MCF 10A (cell line): ENCODE measurements at regions of chr1 and their contacts with region 1.

Region 1: DNA sequence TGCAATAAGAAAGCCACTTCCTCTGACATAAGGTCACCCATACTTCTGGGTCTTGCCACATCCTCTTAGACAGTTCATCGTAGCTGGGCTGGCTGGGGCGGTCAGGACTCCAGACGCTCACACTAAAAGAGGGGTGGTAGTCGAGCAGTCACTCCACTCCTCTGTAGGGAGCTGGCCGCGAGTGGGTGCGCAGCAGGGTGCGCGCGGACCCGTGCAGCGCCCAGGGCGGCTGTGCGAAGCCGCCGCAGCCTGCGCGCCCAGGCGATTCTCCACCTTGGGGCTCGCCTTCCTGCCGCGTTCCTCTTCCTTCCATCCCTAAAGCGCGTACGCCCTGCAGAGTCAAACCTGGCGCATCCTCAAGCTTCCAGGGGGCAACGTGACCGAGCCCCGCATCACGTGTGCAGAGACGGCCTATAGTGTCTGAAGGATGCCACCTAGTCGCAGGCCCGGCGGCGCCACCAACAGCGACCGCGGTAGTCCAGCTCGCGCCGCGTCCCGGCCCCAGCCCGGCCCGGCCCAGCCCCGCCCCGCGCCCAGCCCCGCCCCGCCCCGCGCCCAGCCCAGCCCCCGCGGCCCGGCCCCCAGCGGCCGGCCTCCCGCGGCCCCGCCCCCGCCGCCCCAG is 360 bp upstream of the PRDX6 start:
- DNase-seq: peak; percentile 95
- H3K4me3 Mint-ChIP-seq: peak overlapping the region; percentile 97
- H3K27ac Mint-ChIP-seq: peak overlapping the region; percentile 99
- H3K4me1 Mint-ChIP-seq: peaks cover 62% of the 10 kb centered on the region
- H3K27me3 Mint-ChIP-seq: no peaks in the 10 kb centered on the region
- CTCF ChIP-seq: no peak

Region 2: DNA sequence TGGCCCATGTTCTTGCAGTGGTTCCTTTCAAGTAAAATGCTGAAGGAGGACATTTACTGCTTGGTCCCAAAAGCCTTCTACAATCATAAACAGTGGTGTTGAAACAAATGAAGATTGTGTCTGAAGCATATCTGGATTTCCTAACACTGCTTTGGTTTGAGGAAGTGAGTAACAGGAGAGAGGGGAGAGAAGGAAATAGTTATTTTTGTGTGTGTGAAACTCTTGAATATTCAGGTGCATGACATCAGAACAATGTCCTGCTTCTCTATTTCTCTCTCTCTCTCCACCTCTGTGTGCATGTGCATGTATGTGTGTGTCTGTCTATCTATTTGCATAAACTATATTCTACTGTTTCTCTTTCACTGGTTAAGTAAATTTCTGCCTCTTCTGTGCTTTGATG is 364.6 kb before region 1 on chr1:
- CTCF ChIA-PET with region 1: no interaction called
- POLR2A ChIA-PET with region 1: no interaction called
- intact Hi-C with region 1: no loop called
- DNase-seq: peak; percentile 34
- H3K4me3 Mint-ChIP-seq: no peak overlapping the region
- H3K27ac Mint-ChIP-seq: no peak overlapping the region
- H3K4me1 Mint-ChIP-seq: peaks cover 14% of the 10 kb centered on the region
- H3K27me3 Mint-ChIP-seq: no peaks in the 10 kb centered on the region
- CTCF ChIP-seq: no peak

Region 3: DNA sequence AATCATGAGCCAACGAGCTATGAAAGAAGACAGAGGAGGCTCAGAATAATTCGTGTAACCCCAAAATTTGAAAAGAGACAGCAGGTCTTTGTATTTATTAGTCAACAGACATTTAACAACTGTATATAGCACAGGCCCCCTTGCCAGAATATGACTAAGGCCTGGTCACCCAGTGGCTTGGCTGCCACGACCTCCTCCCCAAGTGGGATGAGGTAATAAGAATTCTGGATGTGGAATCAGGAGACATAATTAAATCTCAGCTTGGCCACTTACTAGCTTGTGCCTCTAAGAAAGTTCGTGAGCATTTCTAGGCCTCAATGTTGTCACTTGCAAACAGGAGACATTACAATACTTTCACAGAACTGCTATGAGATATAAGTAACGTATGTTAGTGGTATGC is 135.5 kb before region 1 on chr1:
- CTCF ChIA-PET with region 1: no interaction called
- POLR2A ChIA-PET with region 1: no interaction called
- intact Hi-C with region 1: no loop called
- DNase-seq: peak; percentile 45
- H3K4me3 Mint-ChIP-seq: no peak overlapping the region
- H3K27ac Mint-ChIP-seq: no peak overlapping the region
- H3K4me1 Mint-ChIP-seq: peaks cover 7% of the 10 kb centered on the region
- H3K27me3 Mint-ChIP-seq: no peaks in the 10 kb centered on the region
- CTCF ChIP-seq: no peak

Region 4: DNA sequence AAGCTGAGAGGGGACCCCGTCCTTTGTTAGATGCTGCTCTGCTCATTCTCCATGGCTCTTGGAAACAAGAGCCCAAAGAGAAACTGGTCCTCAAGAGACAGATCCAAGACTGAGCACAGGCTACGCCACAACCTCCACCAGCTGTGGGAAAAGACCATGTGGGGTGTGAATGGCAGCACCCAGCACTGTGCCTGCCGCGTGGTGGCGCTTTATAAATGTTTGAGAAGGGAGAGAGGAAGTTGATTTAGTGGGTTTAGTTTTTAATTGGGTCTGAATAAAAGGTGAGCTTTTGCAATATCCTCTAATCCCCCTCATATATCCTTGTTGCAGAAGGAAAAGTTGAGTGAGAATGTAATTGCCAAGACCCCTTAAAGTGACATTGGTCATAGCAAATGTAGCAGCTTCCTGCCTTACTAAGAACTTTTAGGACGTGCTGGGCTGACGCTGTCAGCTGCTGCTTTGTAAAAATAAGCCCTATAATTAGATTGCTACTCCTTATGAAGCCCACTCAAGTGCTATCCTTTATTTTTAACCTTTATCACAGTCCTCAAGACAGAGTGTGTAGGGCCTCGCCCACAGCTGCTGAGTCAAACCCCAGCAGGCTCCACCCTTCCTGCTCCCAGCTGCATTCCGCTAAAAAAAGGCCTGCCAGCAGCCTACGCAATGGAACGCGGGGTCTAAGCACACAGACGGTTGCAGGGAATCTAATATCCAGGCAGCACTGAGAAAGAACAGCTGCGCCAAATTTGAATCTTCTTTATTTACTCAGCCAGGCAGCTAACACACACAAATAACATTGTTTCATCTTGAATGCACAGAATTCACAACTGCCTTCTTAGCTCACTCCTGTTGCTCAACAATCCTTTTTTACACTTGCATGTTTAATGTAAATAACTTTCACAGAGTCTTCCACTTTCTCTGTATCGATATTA is 47.0 kb before region 1 on chr1:
- CTCF ChIA-PET with region 1: interaction called, 73 read pairs
- POLR2A ChIA-PET with region 1: interaction called, 111 read pairs
- intact Hi-C with region 1: loop called (anchors 1 kb)
- DNase-seq: peak; percentile 91
- H3K4me3 Mint-ChIP-seq: peak overlapping the region; percentile 60
- H3K27ac Mint-ChIP-seq: peak overlapping the region; percentile 93
- H3K4me1 Mint-ChIP-seq: peaks cover 43% of the 10 kb centered on the region
- H3K27me3 Mint-ChIP-seq: no peaks in the 10 kb centered on the region
- CTCF ChIP-seq: peak; percentile 39

Region 5: DNA sequence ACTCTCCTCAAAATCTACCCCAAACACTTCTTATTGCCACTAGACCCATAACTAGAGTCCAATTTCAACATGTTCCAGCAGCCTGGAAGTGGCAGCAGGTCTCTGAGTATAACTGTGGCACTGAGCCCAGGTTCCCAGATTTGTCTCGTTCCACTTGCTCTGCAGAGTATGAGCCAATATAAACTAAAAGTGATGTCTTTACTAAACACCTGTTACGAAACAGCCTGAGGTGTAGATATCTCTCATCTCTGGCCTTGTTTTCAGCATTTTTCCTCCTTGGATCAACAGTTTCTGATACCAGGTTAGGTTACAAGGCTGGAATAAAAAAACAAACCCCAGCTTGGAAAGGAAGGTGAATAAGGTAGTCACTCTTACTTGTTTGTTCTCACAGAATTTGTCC is 24.8 kb before region 1 on chr1:
- CTCF ChIA-PET with region 1: interaction called, 9 read pairs
- POLR2A ChIA-PET with region 1: interaction called, 59 read pairs
- intact Hi-C with region 1: no loop called
- DNase-seq: peak; percentile 91
- H3K4me3 Mint-ChIP-seq: no peak overlapping the region
- H3K27ac Mint-ChIP-seq: peak overlapping the region; percentile 14
- H3K4me1 Mint-ChIP-seq: peaks cover 23% of the 10 kb centered on the region
- H3K27me3 Mint-ChIP-seq: no peaks in the 10 kb centered on the region
- CTCF ChIP-seq: no peak

Region 6: GRCh38 chr1:173507205-173507846 is 30.6 kb after region 1 on chr1:
- CTCF ChIA-PET with region 1: interaction called, 7 read pairs
- POLR2A ChIA-PET with region 1: interaction called, 77 read pairs
- intact Hi-C with region 1: loop called (anchors 2 kb)
- DNase-seq: peak; percentile 72
- H3K4me3 Mint-ChIP-seq: peak overlapping the region; percentile 24
- H3K27ac Mint-ChIP-seq: peak overlapping the region; percentile 76
- H3K4me1 Mint-ChIP-seq: peaks cover 26% of the 10 kb centered on the region
- H3K27me3 Mint-ChIP-seq: no peaks in the 10 kb centered on the region
- CTCF ChIP-seq: no peak

Region 7: DNA sequence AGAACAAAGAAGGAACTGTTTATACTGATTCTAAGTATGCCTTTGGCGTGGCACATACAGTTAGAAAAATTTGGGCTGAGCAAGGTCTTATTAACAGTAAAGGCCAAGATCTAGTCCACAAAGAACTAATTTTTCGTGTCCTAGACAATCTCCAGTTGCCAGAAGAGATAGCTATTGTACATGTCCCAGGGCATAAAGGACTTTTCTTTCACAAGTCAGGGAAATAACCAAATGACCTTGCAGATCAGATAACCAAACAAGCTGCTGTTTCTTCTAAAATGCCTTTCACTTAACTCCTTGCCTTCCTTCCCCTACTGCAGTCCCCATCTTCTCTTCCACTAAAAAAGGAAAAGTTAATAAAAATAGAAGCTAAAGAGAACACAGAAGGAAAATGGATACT is 162.3 kb after region 1 on chr1:
- CTCF ChIA-PET with region 1: no interaction called
- POLR2A ChIA-PET with region 1: interaction called, 36 read pairs
- intact Hi-C with region 1: no loop called
- DNase-seq: no peak
- H3K4me3 Mint-ChIP-seq: no peak overlapping the region
- H3K27ac Mint-ChIP-seq: peak overlapping the region; percentile 4
- H3K4me1 Mint-ChIP-seq: peaks cover 5% of the 10 kb centered on the region
- H3K27me3 Mint-ChIP-seq: no peaks in the 10 kb centered on the region
- CTCF ChIP-seq: no peak

Region 8: DNA sequence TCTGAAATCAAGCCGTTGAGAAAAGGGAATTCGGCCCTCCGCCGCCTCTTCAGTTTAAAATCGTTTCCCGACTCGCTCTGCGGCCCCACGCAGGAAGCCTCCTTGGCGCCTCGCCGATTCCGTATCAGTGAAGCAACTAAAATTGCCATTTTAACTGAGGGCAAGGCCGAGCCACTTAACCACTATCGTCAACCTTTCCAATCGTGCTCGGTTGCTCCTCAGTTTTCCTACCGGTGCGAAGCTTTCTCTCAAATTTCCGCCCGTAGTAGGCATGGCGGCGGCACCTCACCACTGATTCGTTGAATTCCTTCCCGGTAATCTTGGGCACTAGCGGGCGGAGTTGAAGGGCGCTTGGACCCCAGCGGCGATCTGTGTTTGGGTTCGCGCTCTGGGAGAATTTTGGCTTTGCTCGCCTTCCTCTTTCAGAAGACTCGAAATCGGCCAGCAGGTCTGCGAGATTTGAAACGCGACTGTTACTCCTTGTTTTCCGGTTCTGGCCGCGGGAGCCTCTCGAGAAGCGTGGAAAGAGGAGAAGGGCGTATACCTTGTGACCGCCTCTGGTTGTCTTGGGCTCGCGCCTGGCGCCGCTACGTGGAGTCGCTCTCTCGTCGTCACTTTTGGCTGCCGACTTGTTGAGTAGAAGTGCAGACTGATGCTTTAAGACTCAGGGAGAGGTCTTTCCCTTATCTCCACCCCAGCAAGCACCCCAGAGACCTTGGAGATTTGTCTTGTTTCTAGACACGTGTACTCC is 347.7 kb after region 1 on chr1 and contains the starts of genes CENPL and DARS2:
- CTCF ChIA-PET with region 1: interaction called, 34 read pairs
- POLR2A ChIA-PET with region 1: interaction called, 49 read pairs
- intact Hi-C with region 1: loop called (anchors 1 kb)
- DNase-seq: peak; percentile 100
- H3K4me3 Mint-ChIP-seq: peak within 1 kb of the TSS; percentile 97
- H3K27ac Mint-ChIP-seq: peak within 1 kb of the TSS; percentile 98
- H3K4me1 Mint-ChIP-seq: peaks cover 39% of the 10 kb centered on the region
- H3K27me3 Mint-ChIP-seq: no peaks in the 10 kb centered on the region
- CTCF ChIP-seq: no peak
- total RNA-seq, gene CENPL: 14.1 and 24.5 TPM in 2 replicates
- total RNA-seq, gene DARS2: 34.6 and 40.4 TPM in 2 replicates

Region 9: DNA sequence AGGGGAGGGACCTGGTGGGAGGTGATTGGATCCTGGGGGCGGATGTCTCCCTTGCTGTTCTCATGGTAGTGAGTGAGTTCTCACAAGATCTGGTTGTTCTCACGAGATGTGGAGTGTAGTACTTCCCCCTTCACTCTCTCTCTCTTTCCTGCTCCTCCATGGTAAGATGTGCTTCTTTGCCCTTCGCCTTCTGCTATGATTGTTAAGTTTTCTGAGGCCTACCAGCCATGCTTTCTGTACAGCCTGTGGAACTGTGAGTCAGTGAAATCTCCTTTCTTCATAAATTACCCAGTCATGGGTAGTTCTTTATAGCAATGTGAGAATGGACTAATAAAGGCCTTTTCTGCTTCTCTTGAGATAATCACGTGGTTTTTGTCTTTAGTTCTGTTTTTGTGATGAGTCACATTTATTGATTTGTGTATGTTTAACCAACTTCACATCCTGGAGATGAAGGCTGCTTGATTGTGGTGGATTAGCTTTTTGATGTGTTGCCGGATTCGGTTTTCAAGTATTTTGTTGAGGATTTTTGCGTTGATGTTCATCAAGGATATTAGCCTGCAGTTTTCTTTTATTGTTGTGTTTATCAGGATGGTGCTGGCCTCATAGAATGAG is 728.0 kb after region 1 on chr1:
- CTCF ChIA-PET with region 1: no interaction called
- POLR2A ChIA-PET with region 1: no interaction called
- intact Hi-C with region 1: no loop called
- DNase-seq: no peak
- H3K4me3 Mint-ChIP-seq: no peak overlapping the region
- H3K27ac Mint-ChIP-seq: no peak overlapping the region
- H3K4me1 Mint-ChIP-seq: no peaks in the 10 kb centered on the region
- H3K27me3 Mint-ChIP-seq: no peaks in the 10 kb centered on the region
- CTCF ChIP-seq: no peak